Tibial artery (tissue), 4 donors: ENCODE measurements at regions of chr11 and their contacts with region 1.

Region 1: DNA sequence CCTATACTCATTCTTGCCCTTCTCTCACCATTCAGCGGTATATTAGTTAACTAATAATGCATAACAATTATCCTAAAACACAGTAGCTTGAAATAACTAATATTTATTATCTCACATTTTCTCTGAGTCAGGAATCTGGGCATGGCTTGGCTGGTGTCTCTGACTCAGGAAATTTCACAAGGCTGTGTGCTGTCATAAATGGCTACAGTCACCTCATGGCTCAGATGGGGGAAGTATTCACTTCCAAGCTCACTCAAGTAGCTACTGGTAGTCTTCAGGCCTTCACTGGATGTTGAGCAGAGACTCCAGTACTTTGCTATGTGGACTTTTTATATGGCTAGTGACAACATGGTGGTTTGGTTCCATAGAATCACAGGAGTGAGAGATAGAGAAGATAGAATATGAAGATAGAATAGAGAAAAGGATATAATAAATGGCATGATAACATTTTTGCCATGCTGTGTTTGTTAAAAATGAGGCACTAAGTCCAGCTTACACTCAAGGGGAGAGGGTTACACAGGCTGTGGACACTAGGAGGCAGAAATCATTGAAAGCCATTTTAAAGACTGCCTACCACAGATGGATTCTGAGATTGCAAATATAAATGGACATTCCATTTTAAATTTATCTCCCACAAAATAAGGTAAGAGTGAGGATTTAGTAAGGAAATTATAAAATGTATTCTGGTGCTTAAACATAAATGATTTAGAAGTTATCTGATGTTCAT is 997.8 kb upstream of the CHORDC1 start:
- DNase-seq: no peak
- H3K4me3 ChIP-seq: no peak overlapping the region
- H3K27ac ChIP-seq: no peak overlapping the region
- H3K4me1 ChIP-seq: peaks cover 0 to 32% (median 4%) of the 10 kb centered on the region in 4 donors
- H3K27me3 ChIP-seq: no peaks in the 10 kb centered on the region
- CTCF ChIP-seq: no peak

Region 2: DNA sequence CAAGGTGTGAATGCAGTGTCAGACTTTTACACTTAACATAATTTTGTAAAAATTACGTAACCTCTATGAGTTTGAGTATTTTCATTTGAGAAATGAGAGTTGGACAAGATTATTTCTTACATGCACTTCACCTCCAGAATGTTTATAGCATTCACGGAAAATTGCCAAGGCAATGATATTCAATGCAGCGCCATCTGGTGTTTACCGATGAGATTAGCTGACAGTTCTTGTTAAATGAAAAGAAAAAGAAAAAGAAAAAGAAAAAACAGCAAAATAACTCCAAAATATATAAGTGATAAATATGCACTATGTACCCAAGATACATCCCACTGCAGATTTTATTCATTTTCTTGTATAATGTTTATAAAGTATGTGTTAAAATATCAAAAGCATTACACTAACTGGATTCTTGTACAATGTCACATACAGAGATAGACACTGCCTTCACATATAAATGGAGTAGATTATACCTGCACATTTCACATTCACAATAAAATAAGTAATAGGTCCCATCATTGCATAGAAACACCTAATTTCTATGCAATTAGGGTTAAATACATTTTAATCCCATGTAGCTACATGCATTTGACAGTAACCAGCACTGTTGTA is 27.7 kb after region 1 on chr11:
- intact Hi-C with region 1: no loop called
- DNase-seq: no peak
- H3K4me3 ChIP-seq: no peak overlapping the region
- H3K27ac ChIP-seq: no peak overlapping the region
- H3K4me1 ChIP-seq: no peaks in the 10 kb centered on the region
- H3K27me3 ChIP-seq: no peaks in the 10 kb centered on the region
- CTCF ChIP-seq: peak; percentile 55 to 62

Region 3: DNA sequence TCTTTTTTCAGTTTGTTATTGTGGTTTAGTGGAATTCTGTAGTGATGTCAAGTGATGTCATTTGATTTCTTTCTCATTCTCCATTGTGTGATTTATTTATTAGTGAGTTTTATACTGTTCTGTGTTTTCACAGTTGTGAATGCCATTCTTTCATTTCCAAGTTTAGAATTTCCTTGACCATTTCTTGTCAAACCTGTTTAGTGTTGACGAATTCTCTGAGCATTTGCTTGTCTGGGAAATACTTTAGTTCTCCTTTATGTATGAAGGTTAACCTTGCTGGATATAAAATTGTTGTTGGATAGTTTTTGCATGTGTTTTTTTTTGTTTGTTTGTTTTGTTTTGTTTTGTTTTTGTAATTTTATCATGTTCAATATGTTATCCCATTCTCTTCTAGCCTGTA is 370.4 kb after region 1 on chr11:
- intact Hi-C with region 1: loop called (anchors 5 kb)
- DNase-seq: no peak
- H3K4me3 ChIP-seq: no peak overlapping the region
- H3K27ac ChIP-seq: no peak overlapping the region
- H3K4me1 ChIP-seq: no peaks in the 10 kb centered on the region
- H3K27me3 ChIP-seq: no peaks in the 10 kb centered on the region
- CTCF ChIP-seq: no peak